ENCODE measurements at regions of chr19 and their contacts with region 1.

Region 1: DNA sequence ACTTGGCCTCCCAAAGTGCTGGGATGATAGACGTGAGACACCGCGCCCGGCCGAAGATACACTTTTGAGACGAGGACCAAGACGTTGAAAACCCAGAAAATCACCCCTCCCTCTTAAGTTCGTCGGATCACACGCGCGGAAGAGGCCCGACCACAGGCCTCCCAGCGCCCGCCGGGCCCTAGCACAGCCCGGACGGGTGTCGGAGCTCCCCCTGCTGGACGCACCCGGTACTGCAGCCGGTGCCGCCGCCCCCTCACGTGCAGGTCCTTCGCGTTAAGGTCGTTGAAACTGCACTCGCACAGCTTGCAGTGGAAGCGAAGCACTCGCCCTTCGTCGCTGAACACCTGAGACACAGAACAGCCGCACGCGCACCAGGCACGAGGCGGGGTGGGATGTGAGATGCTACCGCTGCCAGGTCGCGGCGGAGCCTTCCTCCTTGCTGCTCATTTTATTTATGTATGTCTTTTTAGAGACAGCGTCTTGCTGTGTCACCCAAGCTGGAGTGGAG is 35.7 kb upstream of the MATK start:
- DNase-seq: peak; percentile 93
- ATAC-seq: peak; percentile 86
- H3K4me3 Mint-ChIP-seq: no peak overlapping the region
- H3K27ac Mint-ChIP-seq: no peak overlapping the region
- H3K4me1 Mint-ChIP-seq: no peaks in the 10 kb centered on the region
- H3K27me3 Mint-ChIP-seq: peaks cover 5% of the 10 kb centered on the region; the same call in 1 of the 2 replicates
- CTCF ChIP-seq: peak; percentile 100

Region 2: DNA sequence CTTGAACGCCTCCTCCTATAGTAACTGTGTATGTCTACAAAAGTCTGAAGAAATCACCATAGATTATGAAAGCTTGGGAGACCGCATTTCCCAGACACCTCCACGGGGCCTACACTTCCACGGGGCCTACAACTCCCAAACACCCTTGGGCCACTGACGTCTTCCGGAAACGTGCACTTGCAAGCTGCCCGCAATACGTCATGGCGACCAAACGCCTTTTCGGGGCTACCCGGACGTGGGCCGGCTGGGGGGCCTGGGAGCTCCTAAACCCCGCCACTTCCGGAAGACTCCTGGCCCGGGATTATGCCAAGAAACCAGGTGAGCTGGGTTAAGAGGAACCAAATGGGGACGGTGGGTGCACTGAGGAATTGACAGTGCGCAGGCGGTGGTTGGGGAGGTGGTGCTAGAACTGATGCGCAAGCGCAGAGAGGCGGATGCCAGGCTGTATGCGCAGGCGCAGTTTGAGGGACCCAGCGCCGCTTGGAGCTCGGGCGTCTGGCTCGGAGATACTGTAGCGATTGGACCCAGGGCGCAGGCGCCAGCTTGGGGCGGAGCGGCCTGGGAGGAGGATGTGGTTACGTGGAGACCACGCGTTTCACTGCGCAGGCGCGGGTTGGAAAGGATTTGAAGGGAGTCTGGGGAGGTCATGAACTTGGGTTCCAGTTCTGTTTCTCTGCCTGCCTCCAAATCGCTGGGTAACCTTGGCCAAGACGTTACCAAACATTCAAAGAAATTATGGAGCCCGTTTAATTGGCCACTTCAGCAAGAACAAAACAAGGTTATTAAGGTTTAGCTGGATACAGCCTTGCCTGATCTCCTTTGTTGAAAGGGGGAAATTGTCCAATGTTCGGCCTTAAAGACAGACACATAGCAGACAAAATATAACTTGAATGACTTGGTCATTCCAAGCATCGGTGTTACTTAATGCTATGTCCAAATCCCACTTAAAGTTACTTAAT is 59.1 kb before region 1 on chr19 and contains the start of gene MRPL54:
- CTCF ChIA-PET with region 1: interaction called, 24 read pairs
- POLR2A ChIA-PET with region 1: interaction called, 3 read pairs
- DNase-seq: peak; percentile 99
- ATAC-seq: peak; percentile 91
- H3K4me3 Mint-ChIP-seq: peak within 1 kb of the TSS; percentile 97
- H3K27ac Mint-ChIP-seq: peak within 1 kb of the TSS; percentile 95
- H3K4me1 Mint-ChIP-seq: peaks cover 8% of the 10 kb centered on the region
- H3K27me3 Mint-ChIP-seq: peaks cover 3% of the 10 kb centered on the region; the same call in 1 of the 2 replicates
- CTCF ChIP-seq: no peak
- total RNA-seq, gene MRPL54: 60.9 to 65.3 TPM (median 62.3 TPM) in 3 replicates

Region 3: GRCh38 chr19:3783660-3784584 is 38.0 kb before region 1 on chr19:
- CTCF ChIA-PET with region 1: interaction called, 16 read pairs
- POLR2A ChIA-PET with region 1: no interaction called
- DNase-seq: peak; percentile 75
- ATAC-seq: peak; percentile 80
- H3K4me3 Mint-ChIP-seq: peak overlapping the region; percentile 75
- H3K27ac Mint-ChIP-seq: no peak overlapping the region
- H3K4me1 Mint-ChIP-seq: peaks cover 7% of the 10 kb centered on the region
- H3K27me3 Mint-ChIP-seq: peaks cover 17% of the 10 kb centered on the region
- CTCF ChIP-seq: peak; percentile 66

Region 4: GRCh38 chr19:3810708-3811355 is 11.1 kb before region 1 on chr19:
- CTCF ChIA-PET with region 1: interaction called, 25 read pairs
- POLR2A ChIA-PET with region 1: no interaction called
- DNase-seq: no peak
- ATAC-seq: no peak; the same call in 1 of the 2 replicates
- H3K4me3 Mint-ChIP-seq: no peak overlapping the region
- H3K27ac Mint-ChIP-seq: no peak overlapping the region
- H3K4me1 Mint-ChIP-seq: no peaks in the 10 kb centered on the region
- H3K27me3 Mint-ChIP-seq: no peaks in the 10 kb centered on the region
- CTCF ChIP-seq: no peak

Region 5: GRCh38 chr19:3849094-3849493 is 27.2 kb after region 1 on chr19:
- CTCF ChIA-PET with region 1: interaction called, 15 read pairs
- POLR2A ChIA-PET with region 1: no interaction called
- DNase-seq: peak; percentile 33
- ATAC-seq: peak; percentile 75
- H3K4me3 Mint-ChIP-seq: no peak overlapping the region
- H3K27ac Mint-ChIP-seq: no peak overlapping the region
- H3K4me1 Mint-ChIP-seq: no peaks in the 10 kb centered on the region
- H3K27me3 Mint-ChIP-seq: peaks cover 11% of the 10 kb centered on the region
- CTCF ChIP-seq: no peak

Region 6: GRCh38 chr19:3880471-3881271 is 58.8 kb after region 1 on chr19 and contains the start of gene ATCAY:
- CTCF ChIA-PET with region 1: interaction called, 14 read pairs
- POLR2A ChIA-PET with region 1: interaction called, 4 read pairs
- DNase-seq: peak; percentile 69
- ATAC-seq: peak; percentile 71
- H3K4me3 Mint-ChIP-seq: peak within 1 kb of the TSS; percentile 85
- H3K27ac Mint-ChIP-seq: peak within 1 kb of the TSS; percentile 54; the same call in 1 of the 2 replicates
- H3K4me1 Mint-ChIP-seq: peaks cover 13% of the 10 kb centered on the region; the same call in 1 of the 2 replicates
- H3K27me3 Mint-ChIP-seq: peaks cover 10% of the 10 kb centered on the region
- CTCF ChIP-seq: no peak
- total RNA-seq, gene ATCAY: 21.1 to 23.5 TPM (median 21.3 TPM) in 3 replicates

Region 7: DNA sequence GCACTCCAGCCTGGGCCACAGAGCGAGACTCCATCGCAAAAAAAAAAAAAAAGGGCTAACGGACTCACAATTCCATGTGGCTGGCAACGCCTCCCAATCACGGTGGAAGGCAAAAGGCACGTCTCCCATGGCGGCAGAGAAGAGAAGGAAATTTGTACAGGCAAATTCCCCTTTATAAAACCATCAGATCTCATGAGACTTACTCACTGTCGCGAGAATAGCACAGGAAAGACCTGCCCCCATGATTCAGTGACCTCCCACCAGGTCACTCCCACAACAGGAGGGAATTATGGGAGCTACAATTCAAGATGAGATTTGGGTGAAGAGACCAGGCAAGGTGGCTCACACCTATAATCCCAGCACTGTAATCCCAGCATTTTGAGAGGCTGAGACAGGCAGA is 92.3 kb after region 1 on chr19:
- CTCF ChIA-PET with region 1: no interaction called
- POLR2A ChIA-PET with region 1: no interaction called
- DNase-seq: no peak
- ATAC-seq: no peak
- H3K4me3 Mint-ChIP-seq: no peak overlapping the region
- H3K27ac Mint-ChIP-seq: no peak overlapping the region
- H3K4me1 Mint-ChIP-seq: no peaks in the 10 kb centered on the region
- H3K27me3 Mint-ChIP-seq: no peaks in the 10 kb centered on the region; the same call in 1 of the 2 replicates
- CTCF ChIP-seq: no peak

Region 8: DNA sequence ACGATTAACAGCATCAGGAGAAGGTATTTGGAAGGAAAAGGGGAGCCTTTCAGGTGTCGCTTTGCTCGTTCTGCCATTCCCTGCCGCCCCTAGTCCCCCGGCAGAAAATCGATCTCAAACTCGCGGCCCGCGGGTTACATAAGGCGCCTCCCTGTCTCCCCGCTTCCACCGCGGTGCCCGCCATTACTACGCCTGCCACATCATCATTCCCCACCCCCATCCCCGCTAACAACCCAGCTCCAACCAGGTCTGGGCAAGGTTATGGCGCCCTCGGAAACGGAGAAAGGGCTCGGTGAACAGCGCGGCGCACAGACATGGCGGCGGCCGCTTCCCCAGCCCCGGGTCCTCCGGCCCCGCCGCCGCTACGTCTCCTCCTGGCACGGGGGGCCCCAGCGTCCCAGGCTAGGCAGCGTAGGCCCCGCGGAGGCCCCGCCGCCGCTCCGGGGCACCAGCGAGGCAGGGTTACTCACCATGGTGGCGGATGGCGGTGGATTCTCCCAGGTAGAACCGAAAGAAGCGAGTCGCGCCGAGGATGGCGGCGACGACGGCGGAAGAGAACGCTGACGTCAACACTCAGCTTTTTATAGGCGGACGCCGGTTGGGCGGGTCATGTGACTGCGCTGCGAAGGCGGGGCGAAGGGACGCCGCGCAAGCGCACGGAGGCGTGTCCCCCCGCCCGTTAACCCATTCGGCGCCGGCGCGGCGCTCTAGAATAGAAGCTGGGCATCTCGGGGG is 163.2 kb after region 1 on chr19 and contains the start of gene EEF2:
- CTCF ChIA-PET with region 1: interaction called, 15 read pairs
- POLR2A ChIA-PET with region 1: no interaction called
- DNase-seq: peak; percentile 91
- ATAC-seq: 0 out of 2 replicates have a peak, but pooled peaks have one; percentile 5
- H3K4me3 Mint-ChIP-seq: peak within 1 kb of the TSS; percentile 96
- H3K27ac Mint-ChIP-seq: peak within 1 kb of the TSS; percentile 98
- H3K4me1 Mint-ChIP-seq: peaks cover 39% of the 10 kb centered on the region
- H3K27me3 Mint-ChIP-seq: peaks cover 7% of the 10 kb centered on the region
- CTCF ChIP-seq: no peak
- total RNA-seq, gene EEF2: 3,572 to 3,864 TPM (median 3,852 TPM) in 3 replicates

Region 9: GRCh38 chr19:4035582-4035981 is 213.7 kb after region 1 on chr19:
- CTCF ChIA-PET with region 1: no interaction called
- POLR2A ChIA-PET with region 1: no interaction called
- DNase-seq: no peak
- ATAC-seq: no peak
- H3K4me3 Mint-ChIP-seq: no peak overlapping the region
- H3K27ac Mint-ChIP-seq: no peak overlapping the region
- H3K4me1 Mint-ChIP-seq: no peaks in the 10 kb centered on the region
- H3K27me3 Mint-ChIP-seq: no peaks in the 10 kb centered on the region
- CTCF ChIP-seq: no peak